ENCODE measurements at regions of chr2 and their contacts with region 1.

Region 1: GRCh38 chr2:30072250-30072842 is 74.5 kb upstream of the YPEL5 start:
- DNase-seq: peak; percentile 76
- ATAC-seq: peak; percentile 87
- H3K4me3 Mint-ChIP-seq: no peak overlapping the region
- H3K27ac Mint-ChIP-seq: no peak overlapping the region
- H3K4me1 Mint-ChIP-seq: no peaks in the 10 kb centered on the region
- H3K27me3 Mint-ChIP-seq: peaks cover 33% of the 10 kb centered on the region

Region 2: GRCh38 chr2:29923110-29923721 is 149.1 kb before region 1 on chr2:
- CTCF ChIA-PET with region 1: interaction called, 33 read pairs
- DNase-seq: peak; percentile 55
- ATAC-seq: no peak
- H3K4me3 Mint-ChIP-seq: no peak overlapping the region
- H3K27ac Mint-ChIP-seq: no peak overlapping the region
- H3K4me1 Mint-ChIP-seq: peaks cover 3% of the 10 kb centered on the region
- H3K27me3 Mint-ChIP-seq: peaks cover 46% of the 10 kb centered on the region

Measured in activated CD8-positive, alpha-beta memory T cell treated with anti-CD3 and anti-CD28 coated beads, Interleukin-2, amount 10 ng/mL, durations not matched to agents 7 days and 5 days (primary cell).